OCI-LY7 (cell line): ENCODE measurements at regions of chr4 and their contacts with region 1.

Region 1: GRCh38 chr4:167622481-167623246 is 388.4 kb upstream of the SPOCK3 start:
- DNase-seq: peak; percentile 47
- H3K4me3 ChIP-seq: no peak overlapping the region
- H3K27ac ChIP-seq: no peak overlapping the region
- H3K4me1 ChIP-seq: no peaks in the 10 kb centered on the region
- CTCF ChIP-seq: peak; percentile 87

Region 2: GRCh38 chr4:167606551-167606950 is 16.1 kb before region 1 on chr4:
- CTCF ChIA-PET with region 1: no interaction called
- POLR2A ChIA-PET with region 1: interaction called, 4 read pairs
- intact Hi-C with region 1: loop called (anchors 1 kb)
- DNase-seq: no peak
- H3K4me3 ChIP-seq: no peak overlapping the region
- H3K27ac ChIP-seq: no peak overlapping the region
- H3K4me1 ChIP-seq: no peaks in the 10 kb centered on the region
- CTCF ChIP-seq: no peak

Region 3: DNA sequence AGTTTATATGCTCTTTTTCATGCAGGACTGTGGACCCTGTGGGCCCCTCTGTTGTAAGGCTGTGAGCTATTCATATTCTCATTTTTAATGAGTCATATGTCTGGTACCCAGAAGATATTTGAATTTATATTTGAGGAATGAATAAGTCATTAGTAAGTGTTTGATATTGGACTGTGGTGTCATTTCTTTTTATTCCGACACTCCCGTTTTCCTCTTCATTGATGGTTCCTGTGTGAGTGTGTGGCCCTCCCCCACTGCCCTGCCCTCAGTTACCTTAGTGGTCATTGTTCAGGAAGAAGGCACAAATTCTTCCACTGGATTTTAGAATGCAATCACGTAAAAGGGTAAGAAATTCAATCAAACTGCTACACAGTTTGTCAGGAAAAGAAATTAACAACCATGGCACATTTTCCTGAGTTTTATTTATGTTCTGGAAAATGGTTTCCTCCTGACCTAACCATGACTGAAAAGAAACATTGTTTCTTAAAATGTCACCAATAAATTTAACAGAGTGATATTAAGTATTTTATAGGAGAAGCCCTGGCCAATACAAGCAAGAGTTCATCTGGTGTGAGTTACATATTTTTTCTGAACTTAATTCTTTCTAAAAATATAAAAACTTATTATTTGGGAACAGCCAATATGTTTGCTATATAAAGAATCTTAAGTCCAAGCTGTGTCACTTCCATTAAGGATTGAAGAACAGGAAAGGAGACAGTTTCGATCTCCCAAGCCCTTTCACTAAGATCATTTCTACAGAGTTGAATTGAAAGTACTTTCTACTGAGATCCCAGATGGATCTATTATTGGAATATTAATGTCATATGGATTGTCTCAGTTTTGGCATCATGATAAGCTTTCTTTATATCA is 99.2 kb after region 1 on chr4:
- CTCF ChIA-PET with region 1: no interaction called
- POLR2A ChIA-PET with region 1: no interaction called
- intact Hi-C with region 1: no loop called
- DNase-seq: no peak
- H3K4me3 ChIP-seq: no peak overlapping the region
- H3K27ac ChIP-seq: no peak overlapping the region
- H3K4me1 ChIP-seq: no peaks in the 10 kb centered on the region
- CTCF ChIP-seq: no peak